GM10248 (cell line): ENCODE measurements at regions of chr15 and their contacts with region 1.

Region 1: GRCh38 chr15:91694831-91695210 is 158.7 kb upstream of the SLCO3A1 start:
- DNase-seq: no peak
- CTCF ChIP-seq: no peak

Region 2: DNA sequence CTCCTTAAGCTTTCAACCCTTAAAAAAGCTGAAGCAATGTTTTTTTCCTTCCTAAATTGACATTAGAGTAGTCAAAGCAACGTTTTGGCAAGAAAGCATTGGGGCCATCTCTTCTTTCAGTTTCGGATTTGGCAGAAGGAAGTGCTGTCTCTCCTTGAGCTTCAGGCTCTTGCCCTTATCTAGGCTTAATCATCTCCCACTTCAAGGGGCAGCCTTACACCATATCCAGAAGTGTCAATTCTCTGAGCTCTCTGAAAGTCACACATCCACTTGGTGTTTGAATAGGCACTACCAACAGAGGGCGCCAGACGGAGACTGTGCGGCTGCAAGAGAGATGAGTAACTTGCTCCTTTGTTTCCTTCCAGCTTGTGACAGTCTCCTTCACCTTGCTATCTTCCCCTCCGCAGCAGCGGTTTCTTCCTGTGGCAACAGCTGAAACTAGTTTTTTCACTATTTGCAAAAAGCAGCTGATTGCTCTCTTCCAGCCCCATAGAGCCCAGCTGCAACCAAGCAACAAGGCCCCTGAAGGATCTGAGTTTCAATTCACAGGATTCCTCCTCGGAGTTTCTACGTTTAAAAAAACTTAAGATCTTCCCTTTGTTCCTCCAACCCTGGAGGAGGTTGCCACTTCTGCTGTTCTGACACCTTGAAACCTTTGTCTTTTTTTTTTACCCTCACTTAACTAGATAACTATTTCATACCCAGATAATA is 11.7 kb after region 1 on chr15:
- CTCF ChIA-PET with region 1: interaction called, 24 read pairs
- POLR2A ChIA-PET with region 1: no interaction called
- DNase-seq: peak; percentile 29
- CTCF ChIP-seq: peak; percentile 57